Activated CD4-positive, alpha-beta T cell treated with anti-CD3 and anti-CD28 coated beads, Interleukin-2, amount 10 ng/mL, durations not matched to agents 24 days and 14 days (primary cell): ENCODE measurements at regions of chr1 and their contacts with region 1.

Region 1: GRCh38 chr1:23825076-23825761 is at the start of gene HMGCL:
- DNase-seq: peak; percentile 96
- H3K4me3 Mint-ChIP-seq: peak within 1 kb of the TSS; percentile 95
- H3K27ac Mint-ChIP-seq: peak within 1 kb of the TSS; percentile 91
- H3K4me1 Mint-ChIP-seq: peaks cover 16% of the 10 kb centered on the region
- H3K27me3 Mint-ChIP-seq: peaks cover 6% of the 10 kb centered on the region
- total RNA-seq, gene HMGCL: 20.4 and 20.7 TPM in 2 replicates

Region 2: GRCh38 chr1:23959041-23959460 is 133.8 kb after region 1 on chr1:
- intact Hi-C with region 1: loop called (anchors 1 kb)
- DNase-seq: peak; percentile 97
- H3K4me3 Mint-ChIP-seq: peak overlapping the region; percentile 100
- H3K27ac Mint-ChIP-seq: peak overlapping the region; percentile 100
- H3K4me1 Mint-ChIP-seq: peaks cover 47% of the 10 kb centered on the region
- H3K27me3 Mint-ChIP-seq: no peaks in the 10 kb centered on the region